Activated naive CD4-positive, alpha-beta T cell treated with anti-CD3 and anti-CD28 coated beads for 36 hours (primary cell): ENCODE measurements at regions of chrX and their contacts with region 1.

Region 1: DNA sequence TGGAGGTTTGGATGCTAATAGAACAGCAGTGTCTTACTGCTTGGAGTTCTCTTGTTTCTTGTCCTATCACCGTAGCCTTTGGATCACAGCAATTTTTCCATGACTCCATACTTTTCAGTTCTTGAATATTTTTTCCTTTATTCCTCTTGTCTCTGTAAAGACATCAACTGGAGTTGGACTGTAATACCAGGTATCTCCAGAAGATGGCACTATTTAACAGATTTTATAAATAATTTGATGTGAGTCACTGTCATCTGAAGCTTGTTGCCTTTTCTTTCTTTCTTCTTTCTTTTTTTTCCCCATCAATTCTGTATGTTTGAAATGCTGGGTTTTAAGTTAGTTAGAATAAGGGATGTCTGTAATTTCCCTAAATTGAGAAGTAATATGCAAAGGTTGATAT is 24.1 kb downstream of the HPRT1 start:
- DNase-seq: no peak
- H3K4me3 Mint-ChIP-seq: no peak overlapping the region
- H3K27ac Mint-ChIP-seq: no peak overlapping the region
- H3K4me1 Mint-ChIP-seq: peaks cover 3% of the 10 kb centered on the region
- H3K27me3 Mint-ChIP-seq: no peaks in the 10 kb centered on the region

Region 2: DNA sequence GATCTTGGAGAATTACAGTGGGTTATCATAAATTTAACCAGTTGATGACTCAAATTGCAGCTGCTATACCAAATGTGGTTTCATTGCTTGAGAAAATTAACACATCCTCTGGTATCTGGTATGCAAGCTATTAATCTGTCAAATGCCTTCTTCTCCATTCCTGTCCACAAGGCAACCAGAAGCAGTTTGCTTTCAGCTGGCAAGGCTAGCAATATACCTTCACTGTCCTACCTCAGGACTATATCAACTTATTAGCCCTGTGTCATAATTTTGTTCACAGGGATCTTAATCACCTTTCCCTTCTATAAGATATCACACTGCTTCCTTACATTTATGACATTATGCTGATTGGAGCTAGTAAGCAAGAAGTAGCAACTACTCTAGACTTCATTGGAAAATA is 388.7 kb before region 1 on chrX:
- CTCF ChIA-PET with region 1: no interaction called
- intact Hi-C with region 1: no loop called
- DNase-seq: no peak
- H3K4me3 Mint-ChIP-seq: no peak overlapping the region
- H3K27ac Mint-ChIP-seq: no peak overlapping the region
- H3K4me1 Mint-ChIP-seq: no peaks in the 10 kb centered on the region
- H3K27me3 Mint-ChIP-seq: no peaks in the 10 kb centered on the region

Region 3: GRCh38 chrX:134764212-134764785 is 280.3 kb after region 1 on chrX:
- CTCF ChIA-PET with region 1: interaction called, 3 read pairs
- intact Hi-C with region 1: loop called (anchors 1 kb)
- DNase-seq: no peak
- H3K4me3 Mint-ChIP-seq: no peak overlapping the region
- H3K27ac Mint-ChIP-seq: no peak overlapping the region
- H3K4me1 Mint-ChIP-seq: peaks cover 3% of the 10 kb centered on the region
- H3K27me3 Mint-ChIP-seq: no peaks in the 10 kb centered on the region

Region 4: GRCh38 chrX:134782796-134783195 is 298.8 kb after region 1 on chrX:
- CTCF ChIA-PET with region 1: no interaction called
- intact Hi-C with region 1: loop called (anchors 5 kb)
- DNase-seq: no peak
- H3K4me3 Mint-ChIP-seq: no peak overlapping the region
- H3K27ac Mint-ChIP-seq: no peak overlapping the region
- H3K4me1 Mint-ChIP-seq: no peaks in the 10 kb centered on the region
- H3K27me3 Mint-ChIP-seq: no peaks in the 10 kb centered on the region

Region 5: DNA sequence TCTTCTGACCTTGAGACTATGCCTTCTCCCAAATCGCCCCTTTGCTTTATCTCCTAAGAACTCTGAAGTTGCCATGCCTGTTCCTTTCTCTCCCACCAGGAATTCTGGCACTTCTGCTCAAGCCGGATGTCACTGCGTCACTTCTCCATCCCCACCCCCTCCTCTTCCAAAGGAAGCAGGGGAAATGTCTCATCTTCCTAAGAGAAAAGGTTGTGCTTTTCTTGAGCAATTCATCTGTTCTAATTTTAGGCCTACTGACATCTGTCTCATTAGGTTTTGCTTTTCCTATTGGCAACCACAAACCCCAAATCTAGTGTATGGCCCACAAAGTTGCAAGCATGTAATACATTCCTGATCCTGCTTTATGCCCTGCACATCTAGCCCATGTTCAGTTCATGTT is 337.3 kb after region 1 on chrX:
- CTCF ChIA-PET with region 1: no interaction called
- intact Hi-C with region 1: no loop called
- DNase-seq: no peak
- H3K4me3 Mint-ChIP-seq: no peak overlapping the region
- H3K27ac Mint-ChIP-seq: no peak overlapping the region
- H3K4me1 Mint-ChIP-seq: peaks cover 4% of the 10 kb centered on the region
- H3K27me3 Mint-ChIP-seq: no peaks in the 10 kb centered on the region

Region 6: GRCh38 chrX:134908356-134908755 is 424.3 kb after region 1 on chrX:
- CTCF ChIA-PET with region 1: interaction called, 4 read pairs
- intact Hi-C with region 1: loop called (anchors 1 kb)
- DNase-seq: peak; percentile 12
- H3K4me3 Mint-ChIP-seq: no peak overlapping the region
- H3K27ac Mint-ChIP-seq: no peak overlapping the region
- H3K4me1 Mint-ChIP-seq: peaks cover 5% of the 10 kb centered on the region
- H3K27me3 Mint-ChIP-seq: no peaks in the 10 kb centered on the region